ENCODE measurements at regions of chr1 and their contacts with region 1.

Region 1: GRCh38 chr1:186708613-186709203 is 28.5 kb upstream of the PTGS2 start:
- DNase-seq: no peak
- H3K4me3 ChIP-seq: no peak overlapping the region
- H3K27ac ChIP-seq: no peak overlapping the region
- H3K4me1 ChIP-seq: no peaks in the 10 kb centered on the region
- H3K27me3 ChIP-seq: no peaks in the 10 kb centered on the region
- CTCF ChIP-seq: no peak
- POLR2A ChIP-seq: no peak

Region 2: GRCh38 chr1:186689376-186689775 is 19.3 kb before region 1 on chr1:
- intact Hi-C with region 1: loop called in 1 of 2 experiments (anchors 2 kb)
- DNase-seq: no peak
- H3K4me3 ChIP-seq: no peak overlapping the region
- H3K27ac ChIP-seq: no peak overlapping the region
- H3K4me1 ChIP-seq: no peaks in the 10 kb centered on the region
- H3K27me3 ChIP-seq: no peaks in the 10 kb centered on the region
- CTCF ChIP-seq: no peak
- POLR2A ChIP-seq: no peak

Region 3: GRCh38 chr1:186896211-186896610 is 187.5 kb after region 1 on chr1:
- intact Hi-C with region 1: no loop called
- DNase-seq: no peak
- H3K4me3 ChIP-seq: no peak overlapping the region
- H3K27ac ChIP-seq: no peak overlapping the region
- H3K4me1 ChIP-seq: peaks cover 0 to 6% of the 10 kb centered on the region in 2 donors
- H3K27me3 ChIP-seq: no peaks in the 10 kb centered on the region
- CTCF ChIP-seq: no peak
- POLR2A ChIP-seq: no peak

Region 4: DNA sequence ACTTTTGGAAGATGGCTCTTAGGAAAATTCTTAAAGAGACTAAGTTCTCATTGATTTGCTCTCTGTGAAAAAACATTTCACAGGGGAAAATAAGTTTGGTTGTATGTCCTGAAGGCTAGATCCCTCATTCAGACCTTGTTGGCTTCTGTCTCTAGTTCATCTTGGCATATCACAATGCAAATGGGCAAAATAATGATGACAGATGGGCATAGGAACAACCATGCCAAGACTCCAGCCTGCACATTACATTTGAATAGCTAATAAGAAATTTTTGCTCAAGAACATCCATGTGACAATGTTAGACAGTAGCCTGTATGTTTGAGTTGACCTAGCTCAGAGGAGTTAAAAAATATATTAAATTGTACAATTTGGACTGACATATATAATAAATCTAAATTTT is 413.0 kb after region 1 on chr1:
- intact Hi-C with region 1: no loop called
- DNase-seq: no peak
- H3K4me3 ChIP-seq: no peak overlapping the region
- H3K27ac ChIP-seq: no peak overlapping the region
- H3K4me1 ChIP-seq: no peaks in the 10 kb centered on the region
- H3K27me3 ChIP-seq: no peaks in the 10 kb centered on the region
- CTCF ChIP-seq: no peak
- POLR2A ChIP-seq: no peak

Measured in adrenal gland (tissue), 19 donors.